ENCODE measurements at regions of chr11 and their contacts with region 1.

Region 1: DNA sequence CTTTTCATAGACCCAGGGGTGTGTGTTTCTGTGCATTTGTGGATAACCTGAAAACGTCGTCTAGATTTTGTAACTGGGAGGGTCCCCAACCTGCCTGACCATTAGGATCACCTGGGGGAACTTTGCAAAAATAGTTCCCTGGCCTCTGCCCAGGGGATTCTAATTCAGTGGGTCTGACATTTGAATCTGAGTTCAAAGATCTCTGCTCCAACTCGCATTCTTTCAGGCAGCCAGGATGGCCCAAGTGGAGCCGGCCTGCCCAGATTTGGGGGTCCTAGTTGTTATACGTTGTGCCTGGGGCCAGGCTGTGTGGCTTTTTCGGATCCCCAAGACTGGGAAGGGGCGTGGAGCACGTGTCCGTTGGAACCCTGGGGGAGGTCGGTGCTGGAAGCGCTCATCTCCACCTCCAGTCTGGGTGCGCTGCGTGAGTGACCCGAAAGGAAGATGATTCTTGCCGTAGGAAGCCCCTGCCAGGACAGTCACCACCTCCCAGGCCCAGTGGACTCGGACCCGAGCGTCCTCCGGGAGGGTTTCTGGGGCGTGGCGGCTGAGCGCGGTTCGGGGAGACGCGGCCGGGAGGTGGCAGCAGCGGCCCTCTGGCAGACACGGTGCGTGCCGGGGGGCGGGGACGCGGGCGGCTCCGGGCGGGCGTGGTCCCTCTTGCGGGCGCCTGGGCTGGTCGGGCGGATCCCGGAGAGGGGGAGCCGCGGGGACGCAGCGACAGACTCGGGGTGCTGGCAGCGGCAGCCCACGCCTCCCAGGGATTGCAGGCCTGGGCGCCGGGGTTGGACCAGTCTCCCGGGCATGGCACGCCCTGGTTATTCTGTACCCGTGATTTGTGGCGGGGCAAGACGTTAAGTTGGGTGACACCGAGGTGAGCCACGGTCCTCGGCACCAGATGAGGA is 29.2 kb upstream of the PLET1 start:
- DNase-seq: peak; percentile 87 to 91
- ATAC-seq: peak; percentile 86 to 91 (median 89)
- H3K4me3 ChIP-seq: peak overlapping the region; percentile 81
- H3K27ac ChIP-seq: peak overlapping the region; percentile 86
- H3K4me1 ChIP-seq: peaks cover 31% of the 10 kb centered on the region
- H3K27me3 ChIP-seq: no peaks in the 10 kb centered on the region
- CTCF ChIP-seq: peak; percentile 89

Region 2: GRCh38 chr11:112453601-112454577 is 164.0 kb after region 1 on chr11:
- intact Hi-C with region 1: loop called (anchors 5 kb)
- DNase-seq: peak; percentile 19 to 61
- ATAC-seq: peak in 3 of 4 donors; percentile 76 to 86 (median 77)
- H3K4me3 ChIP-seq: no peak overlapping the region
- H3K27ac ChIP-seq: no peak overlapping the region
- H3K4me1 ChIP-seq: no peaks in the 10 kb centered on the region
- H3K27me3 ChIP-seq: no peaks in the 10 kb centered on the region
- CTCF ChIP-seq: peak; percentile 53

Region 3: DNA sequence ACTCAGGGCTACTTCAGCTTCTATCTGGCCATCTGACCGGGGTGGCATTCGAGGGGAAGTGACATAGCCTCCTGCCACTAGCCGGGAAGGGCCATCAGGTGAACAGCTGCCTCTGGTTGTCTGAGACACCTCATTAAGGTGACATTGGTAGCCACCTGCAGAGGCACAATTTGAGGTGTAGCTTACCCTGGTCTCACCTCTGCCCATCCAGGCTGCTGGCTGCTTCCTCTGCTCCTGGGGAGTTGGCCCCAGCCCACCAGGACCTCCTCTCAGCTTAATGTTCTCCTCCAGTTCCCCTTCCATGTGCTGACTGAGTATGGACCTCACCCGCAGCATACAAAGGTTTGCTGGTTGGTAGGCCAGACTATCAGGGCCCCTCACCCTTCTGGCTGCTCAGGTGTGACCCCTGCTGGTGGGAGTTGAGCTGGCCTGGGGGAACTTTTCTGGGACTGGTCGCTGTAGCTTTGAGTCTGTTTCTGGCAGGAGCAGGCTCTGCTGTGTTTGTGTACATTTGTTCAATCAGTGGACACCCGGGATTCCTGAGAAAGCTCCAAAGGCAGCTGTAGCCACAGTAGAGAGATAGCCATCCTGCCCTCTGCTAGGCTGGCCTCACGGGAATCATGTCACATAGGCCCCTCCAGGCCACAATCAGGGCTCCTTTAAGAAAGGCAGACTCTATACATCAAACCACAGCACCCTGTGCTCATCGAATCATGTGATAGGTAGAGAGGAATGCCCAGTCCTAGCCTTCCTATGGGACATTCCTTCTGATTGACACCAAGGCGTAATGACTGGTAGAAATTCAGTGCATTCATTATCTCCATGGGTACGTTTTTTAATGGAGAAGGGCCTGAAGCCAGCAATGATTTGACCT is 265.9 kb after region 1 on chr11:
- intact Hi-C with region 1: loop called (anchors 1 to 5 kb)
- DNase-seq: peak; percentile 54 to 79
- ATAC-seq: peak; percentile 80 to 97 (median 91)
- H3K4me3 ChIP-seq: no peak overlapping the region
- H3K27ac ChIP-seq: no peak overlapping the region
- H3K4me1 ChIP-seq: no peaks in the 10 kb centered on the region
- H3K27me3 ChIP-seq: no peaks in the 10 kb centered on the region
- CTCF ChIP-seq: peak; percentile 74

Region 4: GRCh38 chr11:113113801-113114706 is 824.2 kb after region 1 on chr11:
- intact Hi-C with region 1: loop called in 1 of 2 experiments (anchors 10 kb)
- DNase-seq: peak; percentile 59 to 77
- ATAC-seq: peak; percentile 90 to 96 (median 96)
- H3K4me3 ChIP-seq: no peak overlapping the region
- H3K27ac ChIP-seq: no peak overlapping the region
- H3K4me1 ChIP-seq: peaks cover 13% of the 10 kb centered on the region
- H3K27me3 ChIP-seq: no peaks in the 10 kb centered on the region
- CTCF ChIP-seq: peak; percentile 77

Measured in psoas muscle (tissue), 8 donors.